ENCODE measurements at regions of chr10 and their contacts with region 1.

Region 1: DNA sequence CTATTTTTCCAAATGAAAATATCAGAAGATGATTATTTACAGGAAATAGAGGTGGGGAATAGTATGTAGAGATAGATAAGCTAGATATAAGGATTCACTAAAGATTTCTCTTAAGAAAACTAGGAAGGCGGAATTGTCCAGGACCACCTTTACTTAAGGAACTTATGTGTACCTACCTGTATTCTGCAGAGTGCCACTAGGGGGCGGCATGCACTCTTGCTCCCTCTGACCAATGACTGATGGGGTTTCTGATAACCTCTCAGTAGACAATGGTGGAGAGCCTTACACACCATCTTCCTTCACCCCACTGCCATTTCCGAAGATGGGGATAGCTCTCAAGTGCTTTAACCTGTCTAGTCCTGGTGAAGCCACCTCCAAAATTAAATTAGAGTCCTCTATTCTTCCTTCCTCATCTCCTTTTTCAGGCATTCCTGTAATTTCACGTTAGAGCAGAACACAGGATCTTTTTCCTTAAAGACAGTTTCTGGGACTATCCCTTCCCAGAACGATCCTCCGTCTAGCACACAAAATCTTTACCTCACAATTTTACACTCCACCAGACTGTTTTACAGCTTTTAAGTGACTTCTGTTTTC is 453.1 kb downstream of the SORCS1 start:
- DNase-seq: peak; percentile 43 to 86
- H3K4me3 ChIP-seq: no peak overlapping the region
- H3K27ac ChIP-seq: no peak overlapping the region
- H3K4me1 ChIP-seq: peaks cover 6 to 10% (median 8%) of the 10 kb centered on the region in 4 experiments; a peak in 6 of 7 replicates
- H3K27me3 ChIP-seq: no peaks in the 10 kb centered on the region
- CTCF ChIP-seq: peak; percentile 60 to 85 (median 71)
- EP300 ChIP-seq: no peak
- POLR2A ChIP-seq: no peak
- RAD21 ChIP-seq: peak; percentile 72 to 74

Region 2: GRCh38 chr10:106722524-106722923 is 11.1 kb after region 1 on chr10:
- CTCF ChIA-PET with region 1: interaction called, 52 read pairs
- POLR2A ChIA-PET with region 1: no interaction called
- DNase-seq: no peak
- H3K4me3 ChIP-seq: no peak overlapping the region
- H3K27ac ChIP-seq: no peak overlapping the region
- H3K4me1 ChIP-seq: peaks cover 0 to 4% (median 0%) of the 10 kb centered on the region in 4 experiments; a peak in 2 of 7 replicates
- H3K27me3 ChIP-seq: no peaks in the 10 kb centered on the region
- CTCF ChIP-seq: peak in 1 of 3 experiments; percentile 17; a peak in 1 of 4 replicates
- EP300 ChIP-seq: no peak
- POLR2A ChIP-seq: no peak
- RAD21 ChIP-seq: no peak

Region 3: GRCh38 chr10:106765241-106765754 is 53.9 kb after region 1 on chr10:
- CTCF ChIA-PET with region 1: interaction called, 26 read pairs
- POLR2A ChIA-PET with region 1: no interaction called
- DNase-seq: no peak
- H3K4me3 ChIP-seq: no peak overlapping the region
- H3K27ac ChIP-seq: no peak overlapping the region
- H3K4me1 ChIP-seq: no peaks in the 10 kb centered on the region
- H3K27me3 ChIP-seq: no peaks in the 10 kb centered on the region
- CTCF ChIP-seq: peak; percentile 38 to 51 (median 42)
- EP300 ChIP-seq: no peak
- POLR2A ChIP-seq: no peak
- RAD21 ChIP-seq: peak; percentile 40 to 54; a peak in 3 of 4 replicates

Region 4: GRCh38 chr10:106795619-106796018 is 84.2 kb after region 1 on chr10:
- CTCF ChIA-PET with region 1: interaction called, 28 read pairs
- POLR2A ChIA-PET with region 1: no interaction called
- DNase-seq: peak in 1 of 2 experiments; percentile 29
- H3K4me3 ChIP-seq: no peak overlapping the region
- H3K27ac ChIP-seq: no peak overlapping the region
- H3K4me1 ChIP-seq: no peaks in the 10 kb centered on the region; a peak in 1 of 7 replicates
- H3K27me3 ChIP-seq: no peaks in the 10 kb centered on the region
- CTCF ChIP-seq: peak; percentile 65 to 70 (median 68)
- EP300 ChIP-seq: no peak
- POLR2A ChIP-seq: no peak
- RAD21 ChIP-seq: peak; percentile 93 to 96

Region 5: DNA sequence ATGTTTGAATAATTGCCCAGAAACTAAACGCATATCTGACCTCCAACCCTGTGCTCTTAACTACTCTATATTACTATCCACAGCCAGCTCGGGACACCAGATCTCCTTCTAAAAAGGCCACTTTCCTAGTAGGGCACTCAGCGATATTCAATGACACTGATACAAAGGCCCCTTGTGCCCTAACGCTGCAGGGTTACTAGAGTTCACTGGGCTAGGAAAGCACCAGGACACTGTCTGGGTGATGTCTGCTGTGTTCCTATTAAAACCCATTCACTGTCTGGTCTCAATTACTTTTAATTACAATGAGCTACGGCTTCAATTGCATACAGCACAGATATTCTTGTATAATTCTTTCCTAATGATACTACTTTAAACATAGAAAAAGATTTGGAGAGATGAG is 361.4 kb after region 1 on chr10:
- CTCF ChIA-PET with region 1: no interaction called
- POLR2A ChIA-PET with region 1: no interaction called
- DNase-seq: no peak
- H3K4me3 ChIP-seq: no peak overlapping the region
- H3K27ac ChIP-seq: no peak overlapping the region
- H3K4me1 ChIP-seq: peaks cover 0 to 6% (median 3%) of the 10 kb centered on the region in 4 experiments; a peak in 3 of 7 replicates
- H3K27me3 ChIP-seq: no peaks in the 10 kb centered on the region
- CTCF ChIP-seq: no peak
- EP300 ChIP-seq: no peak
- POLR2A ChIP-seq: no peak
- RAD21 ChIP-seq: no peak